PC-3 (cell line): ENCODE measurements at regions of chr20 and their contacts with region 1.

Region 1: DNA sequence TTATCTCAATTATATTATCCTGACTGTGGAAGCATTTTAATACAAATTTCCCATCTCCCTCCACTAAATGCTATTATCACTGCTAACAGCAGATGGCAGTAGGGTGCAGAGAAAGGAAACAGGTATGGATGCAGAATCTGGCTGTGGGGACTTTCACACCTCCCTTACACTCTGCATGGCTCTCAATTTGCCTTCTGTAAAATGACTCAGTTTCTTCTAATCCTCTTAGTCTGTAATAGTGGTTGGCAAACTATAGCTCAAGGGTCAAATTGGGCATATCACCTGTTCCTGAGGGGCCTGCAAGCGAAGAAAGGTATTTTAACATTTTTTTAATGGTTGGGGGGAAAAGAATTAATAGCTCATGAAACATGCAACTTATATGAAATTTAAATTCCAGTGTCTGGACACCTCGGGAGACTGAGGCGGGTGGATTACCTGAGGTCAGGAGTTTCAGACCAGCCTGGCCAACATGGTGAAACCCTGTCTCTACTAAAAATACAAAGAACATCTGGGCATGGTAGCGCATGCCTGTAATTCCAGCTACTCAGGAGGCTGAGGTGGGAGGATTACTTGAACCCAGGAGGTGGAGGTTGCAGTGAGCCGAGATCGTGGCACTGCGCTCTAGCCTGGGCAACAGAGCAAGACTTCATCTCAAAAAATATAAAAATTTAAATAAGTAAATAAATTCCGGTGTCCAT is 83.5 kb downstream of the ZMYND8 start:
- DNase-seq: peak; percentile 92
- ATAC-seq: peak; percentile 12
- H3K4me3 ChIP-seq: no peak overlapping the region
- H3K27ac ChIP-seq: no peak overlapping the region
- H3K4me1 ChIP-seq: peaks cover 30% of the 10 kb centered on the region
- H3K27me3 ChIP-seq: no peaks in the 10 kb centered on the region
- CTCF ChIP-seq: peak; percentile 97

Region 2: GRCh38 chr20:47196091-47197081 is 76.7 kb before region 1 on chr20:
- CTCF ChIA-PET with region 1: interaction called, 5 read pairs
- POLR2A ChIA-PET with region 1: no interaction called
- intact Hi-C with region 1: loop called (anchors 1 kb)
- DNase-seq: peak; percentile 88
- ATAC-seq: peak; percentile 76
- H3K4me3 ChIP-seq: peak overlapping the region; percentile 49
- H3K27ac ChIP-seq: no peak overlapping the region
- H3K4me1 ChIP-seq: peaks cover 29% of the 10 kb centered on the region
- H3K27me3 ChIP-seq: no peaks in the 10 kb centered on the region
- CTCF ChIP-seq: peak; percentile 99

Region 3: GRCh38 chr20:47212606-47213207 is 60.3 kb before region 1 on chr20:
- CTCF ChIA-PET with region 1: no interaction called
- POLR2A ChIA-PET with region 1: no interaction called
- intact Hi-C with region 1: no loop called
- DNase-seq: no peak
- ATAC-seq: no peak
- H3K4me3 ChIP-seq: no peak overlapping the region
- H3K27ac ChIP-seq: no peak overlapping the region
- H3K4me1 ChIP-seq: no peaks in the 10 kb centered on the region
- H3K27me3 ChIP-seq: no peaks in the 10 kb centered on the region
- CTCF ChIP-seq: no peak

Region 4: GRCh38 chr20:47304287-47304686 is 31.2 kb after region 1 on chr20:
- CTCF ChIA-PET with region 1: interaction called, 6 read pairs
- POLR2A ChIA-PET with region 1: no interaction called
- intact Hi-C with region 1: loop called (anchors 1 kb)
- DNase-seq: peak; percentile 59
- ATAC-seq: peak; percentile 98
- H3K4me3 ChIP-seq: no peak overlapping the region
- H3K27ac ChIP-seq: no peak overlapping the region
- H3K4me1 ChIP-seq: peaks cover 8% of the 10 kb centered on the region; the same call in 1 of the 2 replicates
- H3K27me3 ChIP-seq: no peaks in the 10 kb centered on the region
- CTCF ChIP-seq: peak; percentile 52; the same call in 1 of the 2 replicates

Region 5: GRCh38 chr20:47334022-47334551 is 61.0 kb after region 1 on chr20:
- CTCF ChIA-PET with region 1: no interaction called
- POLR2A ChIA-PET with region 1: no interaction called
- intact Hi-C with region 1: loop called (anchors 1 kb)
- DNase-seq: peak; percentile 98
- ATAC-seq: peak; percentile 95
- H3K4me3 ChIP-seq: peak overlapping the region; percentile 58
- H3K27ac ChIP-seq: peak overlapping the region; percentile 71
- H3K4me1 ChIP-seq: peaks cover 47% of the 10 kb centered on the region
- H3K27me3 ChIP-seq: no peaks in the 10 kb centered on the region
- CTCF ChIP-seq: no peak

Region 6: GRCh38 chr20:47379433-47380150 is 106.5 kb after region 1 on chr20:
- CTCF ChIA-PET with region 1: interaction called, 123 read pairs
- POLR2A ChIA-PET with region 1: interaction called, 4 read pairs
- intact Hi-C with region 1: loop called (anchors 1 kb)
- DNase-seq: no peak
- ATAC-seq: no peak
- H3K4me3 ChIP-seq: no peak overlapping the region
- H3K27ac ChIP-seq: no peak overlapping the region
- H3K4me1 ChIP-seq: peaks cover 12% of the 10 kb centered on the region
- H3K27me3 ChIP-seq: no peaks in the 10 kb centered on the region
- CTCF ChIP-seq: no peak

Region 7: GRCh38 chr20:47620808-47621805 is 348.1 kb after region 1 on chr20:
- CTCF ChIA-PET with region 1: interaction called, 5 read pairs
- POLR2A ChIA-PET with region 1: no interaction called
- intact Hi-C with region 1: loop called (anchors 1 kb)
- DNase-seq: peak; percentile 86
- ATAC-seq: 0 out of 2 replicates have a peak, but pooled peaks have one; percentile 38
- H3K4me3 ChIP-seq: no peak overlapping the region
- H3K27ac ChIP-seq: no peak overlapping the region
- H3K4me1 ChIP-seq: peaks cover 5% of the 10 kb centered on the region; the same call in 1 of the 2 replicates
- H3K27me3 ChIP-seq: no peaks in the 10 kb centered on the region
- CTCF ChIP-seq: peak; percentile 92